PC-9 (cell line): ENCODE measurements at regions of chr19 and their contacts with region 1.

Region 1: DNA sequence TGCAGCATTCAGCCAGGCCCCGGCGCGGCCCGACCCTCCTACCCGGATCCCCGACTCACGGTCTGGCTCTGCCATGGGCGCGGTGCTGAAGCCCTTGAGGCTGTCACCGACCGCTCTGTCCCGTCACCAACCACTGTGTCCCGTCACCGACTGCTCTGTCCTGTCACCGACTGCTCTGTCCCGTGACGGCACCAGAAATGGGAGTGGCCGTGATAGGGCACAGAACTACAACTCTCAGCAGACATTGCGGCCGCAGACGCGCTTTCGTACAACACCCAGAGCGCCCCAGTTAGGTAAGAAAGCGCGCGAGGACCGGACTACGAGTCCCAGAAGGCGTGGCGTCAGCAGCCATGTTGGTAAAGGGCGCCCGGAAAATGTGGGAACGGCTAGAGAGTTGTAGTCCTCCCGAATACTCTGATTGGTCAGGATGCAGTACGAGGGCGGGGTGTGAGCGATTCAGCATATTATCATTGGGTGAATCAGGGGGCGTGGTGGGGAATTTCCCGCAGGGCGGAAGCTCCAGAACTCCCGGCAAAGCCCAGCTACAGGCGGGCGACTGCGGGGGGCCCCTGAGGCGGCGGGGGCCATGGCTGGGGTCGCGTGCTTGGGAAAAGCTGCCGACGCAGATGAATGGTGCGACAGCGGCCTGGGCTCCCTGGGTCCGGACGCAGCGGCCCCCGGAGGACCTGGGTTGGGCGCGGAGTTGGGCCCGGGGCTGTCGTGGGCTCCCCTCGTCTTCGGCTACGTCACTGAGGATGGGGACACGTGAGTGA is at the starts of genes NFKBIB and SIRT2:
- DNase-seq: peak; percentile 99
- H3K4me3 ChIP-seq: peak within 1 kb of the TSS; percentile 73
- H3K27ac ChIP-seq: peak within 1 kb of the TSS; percentile 64
- H3K4me1 ChIP-seq: peaks cover 16% of the 10 kb centered on the region
- H3K27me3 ChIP-seq: no peaks in the 10 kb centered on the region
- CTCF ChIP-seq: no peak
- total RNA-seq, gene NFKBIB: 18.8 and 21.6 TPM in 2 replicates
- total RNA-seq, gene SIRT2: 29.6 and 32.9 TPM in 2 replicates

Region 2: GRCh38 chr19:38862321-38863059 is 37.1 kb before region 1 on chr19:
- CTCF ChIA-PET with region 1: no interaction called
- POLR2A ChIA-PET with region 1: interaction called, 26 read pairs
- intact Hi-C with region 1: no loop called
- DNase-seq: peak in 1 of 2 experiments; percentile 53
- H3K4me3 ChIP-seq: no peak overlapping the region
- H3K27ac ChIP-seq: peak overlapping the region; percentile 99
- H3K4me1 ChIP-seq: peaks cover 52% of the 10 kb centered on the region
- H3K27me3 ChIP-seq: no peaks in the 10 kb centered on the region
- CTCF ChIP-seq: no peak

Region 3: GRCh38 chr19:39277612-39278011 is 378.0 kb after region 1 on chr19:
- CTCF ChIA-PET with region 1: no interaction called
- POLR2A ChIA-PET with region 1: no interaction called
- intact Hi-C with region 1: no loop called
- DNase-seq: peak; percentile 43 to 77
- H3K4me3 ChIP-seq: no peak overlapping the region
- H3K27ac ChIP-seq: no peak overlapping the region
- H3K4me1 ChIP-seq: peaks cover 5% of the 10 kb centered on the region; the same call in 1 of the 2 replicates
- H3K27me3 ChIP-seq: no peaks in the 10 kb centered on the region
- CTCF ChIP-seq: no peak